MCF 10A (cell line): ENCODE measurements at regions of chr19 and their contacts with region 1.

Region 1: GRCh38 chr19:33430674-33431277 is 57.3 kb downstream of the CEBPG start:
- DNase-seq: peak; percentile 72
- H3K4me3 Mint-ChIP-seq: no peak overlapping the region
- H3K27ac Mint-ChIP-seq: no peak overlapping the region
- H3K4me1 Mint-ChIP-seq: peaks cover 5% of the 10 kb centered on the region
- H3K27me3 Mint-ChIP-seq: peaks cover 12% of the 10 kb centered on the region
- CTCF ChIP-seq: peak; percentile 74

Region 2: GRCh38 chr19:33368074-33368864 is 62.5 kb before region 1 on chr19:
- CTCF ChIA-PET with region 1: no interaction called
- POLR2A ChIA-PET with region 1: no interaction called
- intact Hi-C with region 1: no loop called
- DNase-seq: peak; percentile 73
- H3K4me3 Mint-ChIP-seq: no peak overlapping the region
- H3K27ac Mint-ChIP-seq: peak overlapping the region; percentile 74
- H3K4me1 Mint-ChIP-seq: peaks cover 12% of the 10 kb centered on the region
- H3K27me3 Mint-ChIP-seq: no peaks in the 10 kb centered on the region
- CTCF ChIP-seq: no peak

Region 3: GRCh38 chr19:33416307-33417215 is 14.2 kb before region 1 on chr19:
- CTCF ChIA-PET with region 1: interaction called, 18 read pairs
- POLR2A ChIA-PET with region 1: no interaction called
- intact Hi-C with region 1: no loop called
- DNase-seq: peak; percentile 74
- H3K4me3 Mint-ChIP-seq: no peak overlapping the region
- H3K27ac Mint-ChIP-seq: no peak overlapping the region
- H3K4me1 Mint-ChIP-seq: no peaks in the 10 kb centered on the region
- H3K27me3 Mint-ChIP-seq: no peaks in the 10 kb centered on the region
- CTCF ChIP-seq: peak; percentile 70

Region 4: GRCh38 chr19:33450689-33451088 is 19.9 kb after region 1 on chr19:
- CTCF ChIA-PET with region 1: interaction called, 12 read pairs
- POLR2A ChIA-PET with region 1: no interaction called
- intact Hi-C with region 1: no loop called
- DNase-seq: no peak
- H3K4me3 Mint-ChIP-seq: no peak overlapping the region
- H3K27ac Mint-ChIP-seq: no peak overlapping the region
- H3K4me1 Mint-ChIP-seq: no peaks in the 10 kb centered on the region
- H3K27me3 Mint-ChIP-seq: no peaks in the 10 kb centered on the region
- CTCF ChIP-seq: no peak

Region 5: DNA sequence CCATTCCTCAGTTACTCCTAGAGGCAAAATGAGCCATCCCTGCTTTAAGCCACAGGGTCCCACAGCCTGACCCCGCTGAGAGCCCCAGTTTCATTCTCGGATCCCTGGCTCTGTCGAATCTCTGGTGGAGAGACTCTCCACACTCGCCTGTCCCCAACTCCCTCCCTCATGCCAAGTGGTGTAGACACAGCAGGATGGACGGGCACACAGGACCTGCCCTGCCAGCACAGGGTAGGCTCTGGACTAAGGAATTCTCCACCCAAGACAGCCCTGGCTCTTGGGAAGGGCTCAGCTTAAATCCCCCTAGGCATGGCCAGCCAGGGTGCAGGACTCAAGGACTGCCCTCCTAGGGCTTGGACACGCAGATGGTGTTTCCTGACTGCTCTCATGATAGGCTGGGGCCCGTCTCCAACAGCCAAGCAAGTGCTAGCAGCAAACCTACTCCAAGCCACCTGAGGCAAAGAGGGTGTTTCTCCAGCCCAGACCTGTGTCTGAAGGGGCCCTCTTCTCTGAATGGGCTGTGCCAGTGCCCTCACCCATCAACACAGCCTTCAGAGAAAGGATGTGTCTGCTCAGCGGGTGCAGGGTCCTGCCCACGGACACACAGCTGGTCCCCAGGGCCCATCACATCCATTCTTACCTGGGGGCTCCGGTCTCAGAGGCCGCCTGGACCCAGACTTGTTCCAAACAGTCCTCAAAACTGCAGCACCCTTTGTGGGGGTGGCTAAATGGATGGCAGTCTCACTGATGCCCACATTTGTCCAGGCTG is 25.5 kb after region 1 on chr19:
- CTCF ChIA-PET with region 1: interaction called, 12 read pairs
- POLR2A ChIA-PET with region 1: no interaction called
- intact Hi-C with region 1: no loop called
- DNase-seq: no peak
- H3K4me3 Mint-ChIP-seq: no peak overlapping the region
- H3K27ac Mint-ChIP-seq: no peak overlapping the region
- H3K4me1 Mint-ChIP-seq: no peaks in the 10 kb centered on the region
- H3K27me3 Mint-ChIP-seq: no peaks in the 10 kb centered on the region
- CTCF ChIP-seq: no peak